ENCODE measurements at regions of chr15 and their contacts with region 1.

Region 1: GRCh38 chr15:83436458-83437158 is 10.5 kb upstream of the SH3GL3 start:
- DNase-seq: peak; percentile 63 to 68
- ATAC-seq: peak; percentile 83 to 91
- H3K4me3 ChIP-seq: no peak overlapping the region
- H3K27ac ChIP-seq: no peak overlapping the region
- H3K4me1 ChIP-seq: no peaks in the 10 kb centered on the region
- CTCF ChIP-seq: peak; percentile 71
- EP300 ChIP-seq: no peak
- POLR2A ChIP-seq: no peak
- RAD21 ChIP-seq: peak; percentile 74 to 85

Region 2: GRCh38 chr15:83365370-83365938 is 71.2 kb before region 1 on chr15:
- CTCF ChIA-PET with region 1: interaction called, 23 read pairs
- POLR2A ChIA-PET with region 1: no interaction called
- DNase-seq: peak; percentile 32 to 49
- ATAC-seq: peak; percentile 75 to 89
- H3K4me3 ChIP-seq: peak overlapping the region; percentile 39
- H3K27ac ChIP-seq: peak overlapping the region in 1 of 2 experiments; percentile 38; a peak in 4 of 6 replicates
- H3K4me1 ChIP-seq: peaks cover 4% of the 10 kb centered on the region; the same call in 1 of the 3 replicates
- CTCF ChIP-seq: no peak
- EP300 ChIP-seq: no peak
- POLR2A ChIP-seq: no peak
- RAD21 ChIP-seq: no peak

Region 3: GRCh38 chr15:83422081-83422480 is 14.5 kb before region 1 on chr15:
- CTCF ChIA-PET with region 1: interaction called, 59 read pairs
- POLR2A ChIA-PET with region 1: no interaction called
- DNase-seq: no peak
- ATAC-seq: no peak
- H3K4me3 ChIP-seq: no peak overlapping the region
- H3K27ac ChIP-seq: no peak overlapping the region
- H3K4me1 ChIP-seq: no peaks in the 10 kb centered on the region
- CTCF ChIP-seq: no peak
- EP300 ChIP-seq: no peak
- POLR2A ChIP-seq: no peak
- RAD21 ChIP-seq: no peak

Region 4: GRCh38 chr15:83446904-83447709 is 10.5 kb after region 1 on chr15 and contains the start of gene SH3GL3:
- CTCF ChIA-PET with region 1: interaction called, 76 read pairs
- POLR2A ChIA-PET with region 1: no interaction called
- DNase-seq: peak; percentile 63 to 73
- ATAC-seq: peak; percentile 87 to 93
- H3K4me3 ChIP-seq: peak within 1 kb of the TSS; percentile 64
- H3K27ac ChIP-seq: peak within 1 kb of the TSS in 1 of 2 experiments; percentile 56; a peak in 3 of 6 replicates
- H3K4me1 ChIP-seq: 0 out of 3 replicates have a peak, but pooled peaks cover 4% of the 10 kb centered on the region
- CTCF ChIP-seq: peak; percentile 55
- EP300 ChIP-seq: no peak
- POLR2A ChIP-seq: no peak
- RAD21 ChIP-seq: peak; percentile 50 to 56; a peak in 4 of 5 replicates
- polyA plus RNA-seq, gene SH3GL3: 0.19 TPM in 1 of 2 replicates, not detected in the other

Region 5: DNA sequence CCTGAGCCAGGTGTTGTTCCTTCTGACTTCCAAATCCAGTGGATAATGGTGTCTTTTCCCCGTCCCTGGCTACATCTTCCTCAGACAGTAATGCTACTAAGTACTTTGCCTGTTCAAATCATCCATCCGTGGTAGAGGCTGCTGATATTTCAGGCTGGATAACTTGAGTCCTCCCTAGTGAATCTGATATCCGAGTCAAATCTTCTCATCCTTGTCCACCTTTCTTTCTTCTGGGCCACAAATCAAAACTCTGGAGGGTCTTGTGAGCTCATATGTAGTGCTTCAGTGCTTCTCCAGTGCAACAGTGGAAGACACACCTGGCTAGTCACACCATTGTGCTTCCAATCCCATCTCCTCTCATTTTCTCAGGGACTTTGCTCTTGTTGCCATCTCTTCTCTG is 21.8 kb after region 1 on chr15:
- CTCF ChIA-PET with region 1: no interaction called
- POLR2A ChIA-PET with region 1: no interaction called
- DNase-seq: no peak
- ATAC-seq: no peak
- H3K4me3 ChIP-seq: no peak overlapping the region
- H3K27ac ChIP-seq: no peak overlapping the region
- H3K4me1 ChIP-seq: no peaks in the 10 kb centered on the region
- CTCF ChIP-seq: no peak
- EP300 ChIP-seq: no peak
- POLR2A ChIP-seq: no peak
- RAD21 ChIP-seq: no peak

Region 6: DNA sequence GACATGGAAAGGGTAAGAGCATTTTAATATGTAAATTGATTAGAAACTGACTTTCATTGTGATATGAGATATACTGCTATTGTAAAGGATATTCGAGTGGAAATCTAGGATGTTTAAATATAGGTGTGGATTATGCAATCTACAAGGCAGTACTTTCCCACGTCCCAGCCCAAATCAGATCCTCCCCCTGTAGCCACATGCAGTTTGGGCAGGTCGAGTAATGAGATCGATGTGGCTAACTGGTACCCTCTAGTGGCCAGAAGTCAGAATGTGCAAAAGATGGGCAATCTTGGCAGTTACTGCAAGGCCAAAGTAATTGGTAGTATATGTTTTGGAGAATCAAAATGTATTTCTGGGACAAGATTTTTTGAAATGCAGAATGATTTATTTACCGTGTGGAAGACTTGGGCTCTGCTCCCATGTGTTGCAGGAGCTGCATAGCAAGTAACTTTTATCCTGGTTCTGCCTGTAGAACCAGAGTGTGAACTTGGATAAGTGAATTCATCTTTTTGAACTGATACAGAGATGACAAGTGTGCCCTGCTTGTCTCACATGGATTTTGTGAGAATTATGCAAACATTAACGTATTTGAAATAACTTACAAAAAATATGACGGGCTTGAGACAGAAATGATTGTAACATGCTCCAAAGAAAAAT is 122.8 kb after region 1 on chr15:
- CTCF ChIA-PET with region 1: interaction called, 249 read pairs
- POLR2A ChIA-PET with region 1: no interaction called
- DNase-seq: peak; percentile 70 to 76
- ATAC-seq: peak; percentile 86 to 98
- H3K4me3 ChIP-seq: no peak overlapping the region
- H3K27ac ChIP-seq: no peak overlapping the region
- H3K4me1 ChIP-seq: no peaks in the 10 kb centered on the region
- CTCF ChIP-seq: peak; percentile 94
- EP300 ChIP-seq: no peak
- POLR2A ChIP-seq: no peak
- RAD21 ChIP-seq: peak; percentile 92 to 95

Region 7: DNA sequence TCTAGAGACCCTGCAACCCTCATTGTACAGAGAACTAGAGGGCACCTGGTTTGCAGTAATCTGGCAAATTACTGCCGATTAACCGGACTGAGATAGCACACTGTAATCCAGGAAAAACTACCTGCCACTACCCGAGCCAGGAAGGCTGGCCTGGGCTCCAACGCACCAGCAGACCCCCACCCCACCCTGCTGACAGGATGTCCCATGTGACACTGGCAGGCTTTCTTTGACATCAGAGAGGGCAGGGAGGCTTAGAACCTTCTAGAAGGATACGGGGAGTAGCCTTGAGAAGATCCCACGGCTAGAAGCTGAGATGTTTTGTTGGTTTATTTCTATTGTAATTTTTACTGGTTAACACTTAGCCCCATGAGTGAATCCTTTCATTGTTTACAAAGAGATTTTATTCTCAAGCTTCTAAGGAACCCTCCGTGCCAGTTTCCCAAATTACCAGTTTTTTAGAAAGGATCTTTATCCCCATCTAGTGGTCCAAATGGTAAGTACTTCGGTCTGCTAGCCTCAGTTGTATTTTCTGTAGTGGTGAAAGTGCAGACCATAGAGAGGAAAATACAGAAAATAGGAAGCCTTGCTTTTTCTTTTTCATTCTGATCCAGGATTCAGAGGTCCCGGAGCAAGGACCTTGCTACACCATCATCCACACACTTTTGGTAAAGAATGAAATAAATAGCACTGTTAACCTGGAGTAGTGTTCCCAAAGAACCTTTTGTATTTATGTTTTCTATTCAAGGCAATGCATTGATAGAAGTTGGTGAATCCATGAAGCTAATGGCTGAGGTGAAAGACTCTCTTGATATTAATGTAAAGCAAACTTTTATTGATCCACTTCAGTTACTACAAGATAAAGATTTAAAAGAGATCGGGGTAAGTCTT is 135.5 kb after region 1 on chr15:
- CTCF ChIA-PET with region 1: interaction called, 249 read pairs
- POLR2A ChIA-PET with region 1: no interaction called
- DNase-seq: peak; percentile 22 to 29
- ATAC-seq: peak in 1 of 2 experiments; percentile 69; a peak in 2 of 6 replicates
- H3K4me3 ChIP-seq: no peak overlapping the region
- H3K27ac ChIP-seq: no peak overlapping the region
- H3K4me1 ChIP-seq: no peaks in the 10 kb centered on the region
- CTCF ChIP-seq: peak; percentile 61
- EP300 ChIP-seq: no peak
- POLR2A ChIP-seq: no peak
- RAD21 ChIP-seq: peak; percentile 53 to 55